ENCODE measurements at regions of chr10 and their contacts with region 1.

Region 1: DNA sequence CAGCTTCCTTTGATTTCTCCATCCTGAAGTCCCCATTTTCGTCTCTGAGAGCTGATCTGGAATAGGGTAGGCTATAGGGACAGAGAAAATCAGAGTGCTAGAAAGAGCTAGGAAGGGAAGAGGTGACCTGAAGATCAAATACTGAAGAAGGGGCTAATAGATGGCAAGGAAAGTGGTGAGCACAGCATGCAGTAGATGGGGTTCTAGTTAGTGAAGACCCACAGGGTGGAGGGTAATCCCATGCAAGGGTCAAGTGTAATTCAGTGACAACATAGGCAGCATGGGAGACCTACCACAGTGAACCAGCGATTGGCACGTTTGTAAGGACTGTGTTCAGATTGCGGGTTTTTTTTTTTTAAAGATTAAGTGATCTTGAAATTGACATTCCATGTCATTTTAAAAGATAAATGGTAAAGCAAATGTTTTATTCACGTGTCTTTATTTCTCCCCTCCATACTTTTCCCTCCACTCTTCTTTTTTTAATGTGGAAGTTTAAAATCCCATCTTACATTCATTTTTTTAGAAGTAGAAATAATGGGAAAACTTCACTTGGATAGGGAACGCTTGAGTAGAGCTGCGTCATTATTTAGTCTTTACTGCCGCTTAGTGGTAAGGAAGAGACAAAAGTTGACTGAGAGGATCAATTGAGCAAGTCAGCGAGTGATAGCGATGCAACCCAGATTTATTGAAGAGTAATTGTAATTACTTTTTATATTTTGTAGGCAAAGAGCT is 21.0 kb upstream of the ABI1 start:
- DNase-seq: no peak
- H3K4me3 ChIP-seq: no peak overlapping the region
- H3K27ac ChIP-seq: no peak overlapping the region
- H3K4me1 ChIP-seq: no peaks in the 10 kb centered on the region
- H3K27me3 ChIP-seq: peaks cover 2% of the 10 kb centered on the region
- CTCF ChIP-seq: peak in 2 of 3 donors; percentile 53 to 69
- EP300 ChIP-seq: no peak
- POLR2A ChIP-seq: no peak

Region 2: GRCh38 chr10:26682931-26683330 is 198.8 kb before region 1 on chr10:
- intact Hi-C with region 1: loop called in 1 of 4 experiments (anchors 10 kb)
- DNase-seq: no peak
- H3K4me3 ChIP-seq: no peak overlapping the region
- H3K27ac ChIP-seq: no peak overlapping the region
- H3K4me1 ChIP-seq: no peaks in the 10 kb centered on the region
- H3K27me3 ChIP-seq: no peaks in the 10 kb centered on the region
- CTCF ChIP-seq: no peak
- EP300 ChIP-seq: no peak
- POLR2A ChIP-seq: no peak

Region 3: DNA sequence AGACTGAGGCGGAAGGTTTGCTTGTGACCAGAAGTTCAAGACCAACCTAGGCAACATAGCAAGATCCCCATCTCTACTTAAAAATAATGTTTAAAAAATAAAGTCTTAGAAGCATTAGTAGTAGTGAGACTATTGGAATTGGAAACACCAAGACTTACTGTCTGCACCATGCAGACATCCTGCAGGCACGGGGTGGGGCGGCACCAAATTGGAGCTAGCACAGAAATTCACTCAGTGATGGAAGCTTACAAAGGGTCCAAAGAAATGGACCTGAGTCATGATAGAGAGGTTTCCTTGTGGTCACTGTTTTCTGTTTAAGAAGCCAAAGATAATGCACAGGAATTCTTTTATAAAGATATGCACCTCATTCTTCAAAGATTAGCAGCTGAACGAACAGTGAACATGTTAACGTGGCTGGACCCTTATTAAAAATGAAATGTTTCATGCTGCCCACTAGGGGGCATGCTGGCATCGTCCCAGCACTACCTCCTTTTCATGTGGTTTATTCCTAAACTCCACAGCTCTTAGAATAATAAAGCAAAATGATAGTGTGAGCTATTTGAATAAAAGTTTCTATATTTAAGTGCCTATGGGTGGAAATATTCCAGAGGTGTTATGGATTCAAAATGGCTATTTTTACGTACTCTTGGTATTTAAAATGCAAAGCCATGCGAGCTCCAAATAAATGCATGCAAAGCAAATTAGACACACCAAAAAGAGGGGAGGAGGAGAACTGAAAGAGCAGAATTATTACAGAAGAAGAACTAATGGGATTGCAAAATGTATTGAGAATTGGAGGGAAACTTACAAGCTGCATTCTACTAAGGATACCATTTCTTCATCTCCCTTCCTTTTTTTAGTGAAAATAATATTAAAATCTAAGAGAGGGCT is 155.7 kb before region 1 on chr10:
- intact Hi-C with region 1: loop called in 3 of 4 experiments (anchors 2 to 10 kb)
- DNase-seq: peak; percentile 60 to 84 (median 74)
- H3K4me3 ChIP-seq: no peak overlapping the region
- H3K27ac ChIP-seq: no peak overlapping the region
- H3K4me1 ChIP-seq: no peaks in the 10 kb centered on the region
- H3K27me3 ChIP-seq: no peaks in the 10 kb centered on the region
- CTCF ChIP-seq: peak; percentile 55 to 78 (median 70)
- EP300 ChIP-seq: no peak
- POLR2A ChIP-seq: no peak